ENCODE measurements at regions of chr11 and their contacts with region 1.

Region 1: GRCh38 chr11:798093-798713 is at the start of gene SLC25A22:
- DNase-seq: peak; percentile 79 to 87
- ATAC-seq: peak; percentile 51 to 69
- H3K4me3 ChIP-seq: peak within 1 kb of the TSS; percentile 66
- H3K27ac ChIP-seq: peak within 1 kb of the TSS; percentile 76 to 99
- H3K4me1 ChIP-seq: peaks cover 28% of the 10 kb centered on the region
- CTCF ChIP-seq: peak; percentile 84
- EP300 ChIP-seq: no peak
- POLR2A ChIP-seq: peak; percentile 67
- RAD21 ChIP-seq: no peak; a peak in 3 of 5 replicates
- polyA plus RNA-seq, gene SLC25A22: 11.6 and 13.5 TPM in 2 replicates

Region 2: GRCh38 chr11:783581-784015 is 14.6 kb before region 1 on chr11:
- CTCF ChIA-PET with region 1: interaction called, 13 read pairs
- POLR2A ChIA-PET with region 1: interaction called, 3 read pairs
- DNase-seq: peak in 1 of 2 experiments; percentile 50
- ATAC-seq: peak in 1 of 2 experiments; percentile 65; a peak in 3 of 6 replicates
- H3K4me3 ChIP-seq: no peak overlapping the region
- H3K27ac ChIP-seq: no peak overlapping the region
- H3K4me1 ChIP-seq: peaks cover under 1% of the 10 kb centered on the region; the same call in 1 of the 3 replicates
- CTCF ChIP-seq: no peak
- EP300 ChIP-seq: no peak
- POLR2A ChIP-seq: no peak
- RAD21 ChIP-seq: no peak